ENCODE measurements at regions of chrX and their contacts with region 1.

Region 1: DNA sequence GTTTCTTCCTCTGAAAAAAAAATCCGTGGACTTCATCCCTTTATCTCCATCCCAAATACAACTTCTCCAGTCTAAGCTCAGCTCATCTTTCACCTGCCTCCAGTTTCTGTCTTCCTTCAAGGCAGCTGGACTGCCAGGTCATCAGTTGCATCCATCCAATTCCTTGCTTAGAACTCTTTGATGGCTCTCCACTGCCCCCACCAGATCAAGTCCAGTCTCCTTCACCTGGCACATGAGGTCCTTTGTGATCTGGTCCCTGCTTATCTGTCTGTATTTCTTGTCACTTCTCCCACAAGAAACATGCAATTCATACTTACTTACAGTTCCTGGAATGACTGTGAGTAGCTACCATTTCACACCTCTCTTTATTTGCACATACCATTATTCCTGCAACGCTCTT is 33.8 kb downstream of the OTUD6A start:
- H3K4me3 Mint-ChIP-seq: no peak overlapping the region
- H3K27ac Mint-ChIP-seq: no peak overlapping the region
- H3K4me1 Mint-ChIP-seq: no peaks in the 10 kb centered on the region
- H3K27me3 Mint-ChIP-seq: peaks cover 2% of the 10 kb centered on the region

Region 2: GRCh38 chrX:69493193-69493592 is 602.9 kb before region 1 on chrX:
- intact Hi-C with region 1: loop called (anchors 5 kb)
- H3K4me3 Mint-ChIP-seq: no peak overlapping the region
- H3K27ac Mint-ChIP-seq: no peak overlapping the region
- H3K4me1 Mint-ChIP-seq: no peaks in the 10 kb centered on the region
- H3K27me3 Mint-ChIP-seq: peaks cover 1% of the 10 kb centered on the region

Region 3: DNA sequence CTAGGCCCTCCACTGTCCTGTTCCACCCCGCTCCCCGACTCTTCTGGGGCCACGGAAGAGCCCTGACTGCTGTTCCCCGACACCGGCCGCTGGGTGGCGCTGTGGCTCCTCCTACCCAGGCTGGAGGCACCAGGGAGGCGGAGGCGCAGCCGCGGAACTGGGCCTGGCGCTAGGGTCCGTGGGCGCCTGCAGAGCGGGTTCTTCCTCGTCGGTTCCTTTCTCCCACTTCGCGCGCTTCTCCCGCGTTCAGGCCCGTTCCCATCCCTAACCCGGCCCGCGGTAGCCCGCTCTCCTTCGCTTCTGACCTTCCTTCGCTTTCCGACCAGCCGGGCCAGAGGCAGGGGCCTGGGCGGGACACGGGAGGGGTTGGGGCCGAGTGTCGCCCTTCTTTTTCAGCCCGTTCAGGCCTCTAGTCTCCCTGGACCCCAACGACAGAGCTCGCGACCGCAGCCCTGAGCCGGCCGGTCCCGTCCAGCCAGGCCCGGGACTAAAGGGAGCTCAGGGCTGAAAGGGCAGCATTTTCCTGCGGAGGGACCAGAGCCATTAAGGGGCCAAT is 557.7 kb before region 1 on chrX:
- intact Hi-C with region 1: loop called (anchors 5 kb)
- H3K4me3 Mint-ChIP-seq: peak overlapping the region; percentile 68
- H3K27ac Mint-ChIP-seq: peak overlapping the region; percentile 31
- H3K4me1 Mint-ChIP-seq: peaks cover 15% of the 10 kb centered on the region
- H3K27me3 Mint-ChIP-seq: peaks cover 17% of the 10 kb centered on the region

Region 4: GRCh38 chrX:70030301-70030767 is 65.7 kb before region 1 on chrX:
- intact Hi-C with region 1: loop called (anchors 5 kb)
- H3K4me3 Mint-ChIP-seq: no peak overlapping the region
- H3K27ac Mint-ChIP-seq: no peak overlapping the region
- H3K4me1 Mint-ChIP-seq: no peaks in the 10 kb centered on the region
- H3K27me3 Mint-ChIP-seq: peaks cover 2% of the 10 kb centered on the region

Region 5: DNA sequence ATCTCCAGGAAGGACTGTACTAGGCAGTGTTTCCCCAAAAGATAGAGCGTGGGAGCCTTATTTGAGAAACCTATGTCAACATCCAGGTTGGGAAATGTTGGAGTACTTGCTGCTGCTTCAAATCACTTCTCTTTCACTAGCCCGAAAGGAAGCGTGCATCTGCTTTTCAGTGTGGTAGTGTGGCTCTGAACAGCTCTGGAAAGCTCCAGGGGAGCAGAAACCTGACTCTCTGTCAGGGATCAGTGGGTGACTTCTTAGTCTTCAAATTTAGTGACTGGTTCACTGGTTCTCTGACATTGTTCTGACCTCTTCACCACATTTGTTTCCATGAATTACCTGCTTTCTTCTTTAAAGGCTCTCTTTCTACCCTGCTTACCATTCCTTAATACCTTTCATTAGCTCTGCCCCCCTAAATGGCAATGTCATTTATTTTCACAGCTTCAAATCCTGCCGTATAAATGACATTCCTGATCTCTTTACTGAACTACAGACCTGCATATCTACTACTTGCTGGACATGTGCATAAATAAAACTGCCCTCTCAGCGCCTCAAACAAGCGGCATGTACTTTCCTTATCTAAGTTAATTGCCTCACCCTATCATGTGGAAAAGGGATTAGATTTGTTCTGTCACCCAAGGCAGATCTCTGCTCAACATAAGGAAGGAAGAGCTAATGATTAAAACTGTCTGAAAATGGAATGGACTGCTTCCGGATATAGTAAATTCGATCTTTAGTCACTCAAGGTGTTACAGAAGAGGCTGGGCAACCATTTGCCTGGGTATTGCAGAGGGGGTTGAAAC is 385.6 kb after region 1 on chrX:
- intact Hi-C with region 1: no loop called
- H3K4me3 Mint-ChIP-seq: no peak overlapping the region
- H3K27ac Mint-ChIP-seq: no peak overlapping the region
- H3K4me1 Mint-ChIP-seq: peaks cover 25% of the 10 kb centered on the region
- H3K27me3 Mint-ChIP-seq: peaks cover 4% of the 10 kb centered on the region

Measured in dendritic cell treated with granulocyte-macrophage colony-stimulating factor and Interleukin-4, amounts not matched to agents 40 ng/mL and 50 ng/mL, for 4 days (primary cell).